ENCODE measurements at regions of chr9 and their contacts with region 1.

Region 1: DNA sequence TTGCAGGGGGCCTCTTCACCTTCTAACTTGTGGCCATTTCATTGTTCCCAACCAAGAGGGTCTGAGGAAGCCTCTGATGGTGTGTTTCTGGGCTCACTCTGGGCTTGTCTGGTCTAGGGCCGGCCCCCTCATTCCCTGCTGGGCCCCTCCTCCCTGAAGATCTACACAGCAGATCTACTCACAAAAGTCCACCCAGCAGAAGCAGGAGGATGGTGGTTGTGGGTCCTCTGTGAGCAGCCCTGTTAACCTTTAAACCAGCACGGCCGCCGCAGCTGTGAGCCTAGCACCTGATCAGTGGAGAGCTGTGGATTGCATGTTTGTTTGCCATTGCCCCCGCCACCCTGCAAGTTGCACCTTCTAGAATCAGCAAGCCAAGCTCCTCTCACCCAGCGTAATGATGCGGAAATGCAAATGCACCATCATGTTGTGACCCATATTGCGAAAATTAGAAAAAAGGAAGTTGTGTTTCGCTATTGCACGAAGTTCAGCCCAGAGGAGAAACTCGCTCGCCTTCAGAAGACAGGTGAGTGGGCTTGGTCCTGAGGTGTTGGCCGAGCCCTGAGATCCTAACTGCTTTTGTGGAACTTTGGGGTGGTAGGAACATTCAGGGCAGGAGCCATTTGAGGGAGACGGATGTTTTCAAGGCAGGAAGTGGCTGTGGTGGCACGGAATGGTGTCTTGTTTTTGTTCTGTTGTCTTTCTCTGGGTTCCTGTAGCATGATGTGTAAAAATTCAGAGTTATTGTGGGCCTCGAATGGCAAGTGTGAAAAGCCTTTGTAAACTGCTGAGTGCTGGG is 16.7 kb downstream of the FGD3 start:
- DNase-seq: peak; percentile 87 to 92 (median 90)
- H3K4me3 ChIP-seq: peak overlapping the region; percentile 86 to 97
- H3K4me3 Mint-ChIP-seq: peak overlapping the region; percentile 93 to 99 (median 94)
- H3K27ac ChIP-seq: peak overlapping the region; percentile 84
- H3K27ac Mint-ChIP-seq: peak overlapping the region; percentile 96 to 100 (median 98)
- H3K4me1 ChIP-seq: peaks cover 81% of the 10 kb centered on the region
- H3K4me1 Mint-ChIP-seq: peaks cover 30 to 90% (median 57%) of the 10 kb centered on the region in 4 donors
- H3K27me3 ChIP-seq: no peaks in the 10 kb centered on the region
- H3K27me3 Mint-ChIP-seq: no peaks in the 10 kb centered on the region

Region 2: GRCh38 chr9:92877531-92878430 is 86.2 kb before region 1 on chr9 and contains the start of gene ZNF484:
- CTCF ChIA-PET with region 1: no interaction called
- POLR2A ChIA-PET with region 1: no interaction called
- intact Hi-C with region 1: loop called (anchors 1 kb)
- DNase-seq: peak; percentile 94 to 97 (median 95)
- H3K4me3 ChIP-seq: peak within 1 kb of the TSS; percentile 81 to 97
- H3K4me3 Mint-ChIP-seq: peak within 1 kb of the TSS; percentile 87 to 100 (median 99)
- H3K27ac ChIP-seq: peak within 1 kb of the TSS; percentile 94
- H3K27ac Mint-ChIP-seq: peak within 1 kb of the TSS; percentile 96 to 100 (median 99)
- H3K4me1 ChIP-seq: peaks cover 35% of the 10 kb centered on the region
- H3K4me1 Mint-ChIP-seq: peaks cover 30 to 48% (median 40%) of the 10 kb centered on the region in 4 donors
- H3K27me3 ChIP-seq: no peaks in the 10 kb centered on the region
- H3K27me3 Mint-ChIP-seq: no peaks in the 10 kb centered on the region
- total RNA-seq, gene ZNF484: 22.6 to 24.7 TPM

Region 3: GRCh38 chr9:92895812-92896436 is 68.1 kb before region 1 on chr9:
- CTCF ChIA-PET with region 1: no interaction called
- POLR2A ChIA-PET with region 1: no interaction called
- intact Hi-C with region 1: no loop called
- DNase-seq: no peak
- H3K4me3 ChIP-seq: no peak overlapping the region
- H3K4me3 Mint-ChIP-seq: no peak overlapping the region
- H3K27ac ChIP-seq: no peak overlapping the region
- H3K27ac Mint-ChIP-seq: peak overlapping the region in 1 of 7 donors; percentile 8
- H3K4me1 ChIP-seq: no peaks in the 10 kb centered on the region
- H3K4me1 Mint-ChIP-seq: peaks cover 1 to 7% (median 4%) of the 10 kb centered on the region in 4 donors
- H3K27me3 ChIP-seq: no peaks in the 10 kb centered on the region
- H3K27me3 Mint-ChIP-seq: no peaks in the 10 kb centered on the region

Region 4: DNA sequence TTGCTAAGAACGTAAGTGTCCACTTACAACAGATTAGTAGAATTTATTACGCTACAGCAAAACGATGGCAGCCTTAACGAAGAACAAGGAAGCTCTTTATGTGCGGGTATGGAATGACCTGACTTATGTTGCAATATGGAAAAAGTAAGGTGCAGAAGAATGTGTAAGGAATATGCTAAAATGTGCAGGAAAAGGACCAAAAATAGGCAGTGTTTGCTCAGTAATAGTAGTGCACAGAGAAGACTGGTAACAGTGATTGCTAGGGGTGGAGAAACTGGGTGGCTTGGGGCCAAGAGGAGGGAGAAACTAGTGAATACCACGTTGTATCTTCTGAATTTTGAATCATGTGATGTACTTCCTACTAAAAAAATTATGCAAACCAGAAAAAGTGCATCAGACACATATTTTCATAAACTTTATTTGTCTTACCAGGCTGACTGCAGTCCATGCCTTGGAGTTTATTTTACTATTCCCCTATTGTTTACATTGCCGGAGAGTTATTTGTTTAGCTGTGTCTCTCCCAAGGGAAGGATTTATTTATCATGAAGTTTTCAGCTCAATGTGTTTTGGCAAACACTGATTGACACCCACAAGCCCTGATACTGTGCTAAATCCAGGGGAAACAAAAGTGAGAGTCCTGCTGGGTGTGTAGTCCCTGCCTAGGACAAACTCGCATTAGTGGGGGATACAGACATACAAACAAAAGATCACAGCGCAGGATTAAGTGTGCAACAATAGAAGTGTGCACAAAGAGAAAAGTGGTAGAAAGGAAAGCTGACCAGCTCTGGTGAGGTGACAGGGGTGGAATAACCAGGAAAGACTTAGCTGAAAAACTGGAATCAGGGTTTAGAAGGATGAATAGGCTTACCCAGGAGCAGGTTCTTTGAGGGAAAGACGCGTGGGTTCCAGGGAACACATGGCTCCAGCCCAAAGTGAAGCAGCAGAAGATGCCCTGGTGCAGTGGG is 52.2 kb before region 1 on chr9:
- CTCF ChIA-PET with region 1: no interaction called
- POLR2A ChIA-PET with region 1: no interaction called
- intact Hi-C with region 1: no loop called
- DNase-seq: no peak
- H3K4me3 ChIP-seq: no peak overlapping the region
- H3K4me3 Mint-ChIP-seq: no peak overlapping the region
- H3K27ac ChIP-seq: no peak overlapping the region
- H3K27ac Mint-ChIP-seq: peak overlapping the region in 2 of 7 donors; percentile 4 to 61
- H3K4me1 ChIP-seq: no peaks in the 10 kb centered on the region
- H3K4me1 Mint-ChIP-seq: peaks cover under 1 to 8% (median 6%) of the 10 kb centered on the region in 4 donors
- H3K27me3 ChIP-seq: no peaks in the 10 kb centered on the region
- H3K27me3 Mint-ChIP-seq: peaks cover 4 to 5% of the 10 kb centered on the region in 2 donors

Region 5: DNA sequence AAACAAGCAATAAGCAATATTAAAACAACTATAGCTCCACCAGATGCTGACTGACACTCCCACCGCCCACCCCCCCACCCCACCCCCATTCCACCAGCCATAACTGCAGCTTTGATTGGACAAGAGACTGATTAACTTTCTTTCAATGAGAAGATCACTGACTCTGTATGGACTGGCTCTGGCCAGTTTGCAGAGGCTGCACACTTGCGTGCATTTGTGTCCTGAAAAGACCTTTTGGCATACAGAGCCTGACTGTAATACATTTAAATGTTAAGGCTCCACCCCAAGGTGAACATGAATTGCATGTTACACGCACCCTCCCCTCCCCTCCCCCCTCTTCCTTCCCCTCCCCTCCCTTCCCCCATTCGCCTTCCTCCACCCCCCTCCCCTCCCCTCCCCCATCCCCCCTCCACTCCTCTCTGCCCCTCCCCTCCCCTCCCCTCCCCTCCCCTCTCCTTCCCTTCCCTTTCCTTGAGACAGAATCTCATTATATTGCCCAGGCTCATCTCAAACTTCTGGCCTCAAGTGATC is 14.4 kb after region 1 on chr9:
- CTCF ChIA-PET with region 1: interaction called, 11 read pairs
- POLR2A ChIA-PET with region 1: interaction called, 193 read pairs
- intact Hi-C with region 1: no loop called
- DNase-seq: no peak
- H3K4me3 ChIP-seq: no peak overlapping the region
- H3K4me3 Mint-ChIP-seq: peak overlapping the region; percentile 7 to 82 (median 71)
- H3K27ac ChIP-seq: no peak overlapping the region
- H3K27ac Mint-ChIP-seq: peak overlapping the region; percentile 57 to 91 (median 86)
- H3K4me1 ChIP-seq: peaks cover 87% of the 10 kb centered on the region
- H3K4me1 Mint-ChIP-seq: peaks cover 56 to 91% (median 78%) of the 10 kb centered on the region in 4 donors
- H3K27me3 ChIP-seq: no peaks in the 10 kb centered on the region
- H3K27me3 Mint-ChIP-seq: no peaks in the 10 kb centered on the region

Region 6: GRCh38 chr9:92986176-92987085 is 22.4 kb after region 1 on chr9:
- CTCF ChIA-PET with region 1: interaction called, 8 read pairs
- POLR2A ChIA-PET with region 1: interaction called, 193 read pairs
- intact Hi-C with region 1: loop called (anchors 1 kb)
- DNase-seq: peak; percentile 50 to 72 (median 62)
- H3K4me3 ChIP-seq: no peak overlapping the region
- H3K4me3 Mint-ChIP-seq: peak overlapping the region in 7 of 8 donors; percentile 8 to 78 (median 43)
- H3K27ac ChIP-seq: peak overlapping the region; percentile 38
- H3K27ac Mint-ChIP-seq: peak overlapping the region; percentile 61 to 93 (median 87)
- H3K4me1 ChIP-seq: peaks cover 87% of the 10 kb centered on the region
- H3K4me1 Mint-ChIP-seq: peaks cover 62 to 95% (median 76%) of the 10 kb centered on the region in 4 donors
- H3K27me3 ChIP-seq: no peaks in the 10 kb centered on the region
- H3K27me3 Mint-ChIP-seq: no peaks in the 10 kb centered on the region

Region 7: DNA sequence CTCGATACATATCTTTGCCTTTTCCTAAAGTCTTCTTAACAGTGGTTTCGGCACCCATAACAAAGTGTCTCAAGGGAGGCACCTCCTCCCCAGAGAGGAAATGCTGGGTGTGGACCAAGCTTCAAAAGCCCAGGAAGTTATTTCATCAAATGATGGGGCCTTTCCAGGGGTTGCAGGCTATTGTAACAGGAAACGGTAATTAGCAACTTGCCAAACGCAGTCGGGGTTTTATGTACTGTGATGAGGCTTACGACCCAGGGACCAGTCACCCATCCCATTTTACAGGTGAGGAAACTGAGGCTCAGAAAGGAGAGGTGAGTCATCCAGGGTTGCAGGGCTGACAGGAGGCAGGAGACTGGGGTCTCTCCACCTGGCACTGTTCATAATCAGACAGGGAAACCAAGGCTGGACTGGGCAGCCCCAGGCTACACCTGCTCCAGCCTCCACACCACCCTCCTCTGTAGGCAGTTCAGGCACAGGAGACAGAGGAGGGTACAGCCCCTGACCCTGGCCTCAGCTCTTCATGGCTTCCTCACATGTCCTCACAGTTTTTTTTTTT is 64.5 kb after region 1 on chr9:
- CTCF ChIA-PET with region 1: no interaction called
- POLR2A ChIA-PET with region 1: interaction called, 50 read pairs
- intact Hi-C with region 1: no loop called
- DNase-seq: peak; percentile 84 to 94 (median 89)
- H3K4me3 ChIP-seq: peak overlapping the region; percentile 52 to 55
- H3K4me3 Mint-ChIP-seq: peak overlapping the region; percentile 82 to 90 (median 86)
- H3K27ac ChIP-seq: peak overlapping the region; percentile 91
- H3K27ac Mint-ChIP-seq: peak overlapping the region; percentile 94 to 99 (median 96)
- H3K4me1 ChIP-seq: peaks cover 95% of the 10 kb centered on the region
- H3K4me1 Mint-ChIP-seq: peaks cover 43 to 95% (median 78%) of the 10 kb centered on the region in 4 donors
- H3K27me3 ChIP-seq: no peaks in the 10 kb centered on the region
- H3K27me3 Mint-ChIP-seq: no peaks in the 10 kb centered on the region

Region 8: GRCh38 chr9:93058355-93059096 is 94.5 kb after region 1 on chr9 and contains the start of gene SUSD3:
- CTCF ChIA-PET with region 1: interaction called, 3 read pairs
- POLR2A ChIA-PET with region 1: interaction called, 50 read pairs
- intact Hi-C with region 1: no loop called
- DNase-seq: peak; percentile 58 to 76 (median 63)
- H3K4me3 ChIP-seq: peak within 1 kb of the TSS; percentile 86 to 92
- H3K4me3 Mint-ChIP-seq: peak within 1 kb of the TSS; percentile 94 to 95 (median 95)
- H3K27ac ChIP-seq: peak within 1 kb of the TSS; percentile 72
- H3K27ac Mint-ChIP-seq: peak within 1 kb of the TSS; percentile 96 to 100 (median 99)
- H3K4me1 ChIP-seq: peaks cover 76% of the 10 kb centered on the region
- H3K4me1 Mint-ChIP-seq: peaks cover 30 to 82% (median 58%) of the 10 kb centered on the region in 4 donors
- H3K27me3 ChIP-seq: no peaks in the 10 kb centered on the region
- H3K27me3 Mint-ChIP-seq: no peaks in the 10 kb centered on the region
- total RNA-seq, gene SUSD3: 58.3 to 63.7 TPM

Region 9: DNA sequence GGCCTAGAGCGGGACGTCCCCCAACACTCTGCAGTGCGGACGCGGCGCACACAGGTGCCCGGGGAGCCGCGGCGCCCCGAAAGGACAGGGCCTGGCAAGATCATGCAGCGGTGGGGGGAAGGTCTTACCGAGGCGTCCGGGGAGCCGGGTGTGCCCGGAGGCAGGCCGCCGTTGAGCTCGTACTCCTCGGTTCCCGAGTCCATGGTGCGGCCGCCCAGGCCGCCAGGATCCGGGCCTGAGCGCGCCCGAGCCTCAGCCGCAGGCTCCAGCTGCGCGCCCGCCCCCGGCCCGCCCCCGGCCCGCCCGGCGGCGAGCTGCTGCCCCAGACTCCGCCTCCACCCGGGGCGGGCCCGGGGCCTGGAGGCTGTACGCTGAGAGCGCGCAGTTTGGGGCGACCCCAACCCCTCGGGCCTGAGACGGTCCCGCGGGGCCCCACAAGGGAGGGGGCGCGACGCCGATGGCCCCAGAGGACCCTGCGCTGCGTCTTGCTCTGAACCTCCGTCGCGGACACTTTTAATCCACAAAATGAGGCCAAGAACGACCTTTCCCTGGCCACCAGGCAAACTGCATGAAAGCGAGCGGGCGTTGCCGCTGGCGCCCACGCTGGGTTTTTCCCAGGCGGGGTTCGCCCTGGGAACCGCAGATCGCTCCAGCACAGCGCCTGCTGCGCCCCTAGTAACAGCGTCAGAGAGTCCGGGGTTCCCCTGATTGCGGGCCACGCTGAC is 170.1 kb after region 1 on chr9 and contains the start of gene NINJ1:
- CTCF ChIA-PET with region 1: no interaction called
- POLR2A ChIA-PET with region 1: interaction called, 12 read pairs
- intact Hi-C with region 1: no loop called
- DNase-seq: peak; percentile 87 to 96 (median 89)
- H3K4me3 ChIP-seq: peak within 1 kb of the TSS; percentile 52 to 82
- H3K4me3 Mint-ChIP-seq: peak within 1 kb of the TSS; percentile 88 to 96 (median 90)
- H3K27ac ChIP-seq: peak within 1 kb of the TSS; percentile 92
- H3K27ac Mint-ChIP-seq: peak within 1 kb of the TSS; percentile 97 to 99 (median 99)
- H3K4me1 ChIP-seq: peaks cover 48% of the 10 kb centered on the region
- H3K4me1 Mint-ChIP-seq: peaks cover 26 to 79% (median 50%) of the 10 kb centered on the region in 4 donors
- H3K27me3 ChIP-seq: no peaks in the 10 kb centered on the region
- H3K27me3 Mint-ChIP-seq: no peaks in the 10 kb centered on the region
- total RNA-seq, gene NINJ1: 31.1 to 31.3 TPM

Measured in CD4-positive, alpha-beta memory T cell (primary cell).